ENCODE measurements at regions of chr5 and their contacts with region 1.

Region 1: DNA sequence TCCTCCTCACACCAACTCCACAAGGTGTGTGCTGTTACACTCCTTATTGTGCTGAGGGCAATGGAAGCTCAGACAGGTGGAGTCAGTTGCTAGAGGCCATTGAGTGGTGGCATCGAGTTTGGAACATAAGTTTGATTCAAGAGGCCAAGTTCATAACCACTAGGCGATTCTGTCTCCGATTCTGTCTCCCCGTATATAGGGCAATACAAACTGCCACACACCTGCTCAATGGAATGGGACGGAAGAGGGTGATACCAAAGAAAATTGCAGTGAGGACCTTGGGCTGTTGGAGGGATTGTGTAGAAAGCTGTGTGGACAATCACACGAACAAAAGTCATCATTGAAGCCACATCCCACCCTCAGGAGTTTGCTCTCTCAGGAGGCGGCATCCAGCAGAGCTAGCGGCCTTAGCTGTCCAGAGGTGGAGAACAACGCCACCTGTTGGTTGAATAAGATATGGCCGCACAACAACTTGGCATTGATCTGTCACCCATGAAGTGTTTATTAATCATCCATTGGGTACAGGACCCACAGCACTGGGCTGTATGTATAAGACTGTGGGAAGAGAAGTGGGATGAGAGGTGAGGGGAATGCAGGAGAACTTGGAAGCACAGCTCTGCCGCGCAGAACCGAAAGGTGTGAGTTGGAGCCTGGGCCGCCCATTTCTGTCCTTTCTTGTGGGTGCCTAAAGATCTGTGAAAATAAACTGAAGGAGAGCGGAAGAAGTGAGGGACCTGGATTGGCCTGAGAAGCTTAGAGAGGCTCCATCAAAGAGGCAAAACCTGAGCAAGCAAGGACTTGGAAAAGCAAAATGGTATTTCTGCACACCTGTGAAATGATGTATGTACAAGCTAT is 16.1 kb upstream of the NEUROG1 start:
- DNase-seq: peak; percentile 65
- H3K4me3 ChIP-seq: no peak overlapping the region
- H3K27ac ChIP-seq: no peak overlapping the region
- H3K4me1 ChIP-seq: no peaks in the 10 kb centered on the region
- H3K27me3 ChIP-seq: peaks cover 7% of the 10 kb centered on the region
- CTCF ChIP-seq: peak; percentile 74

Region 2: DNA sequence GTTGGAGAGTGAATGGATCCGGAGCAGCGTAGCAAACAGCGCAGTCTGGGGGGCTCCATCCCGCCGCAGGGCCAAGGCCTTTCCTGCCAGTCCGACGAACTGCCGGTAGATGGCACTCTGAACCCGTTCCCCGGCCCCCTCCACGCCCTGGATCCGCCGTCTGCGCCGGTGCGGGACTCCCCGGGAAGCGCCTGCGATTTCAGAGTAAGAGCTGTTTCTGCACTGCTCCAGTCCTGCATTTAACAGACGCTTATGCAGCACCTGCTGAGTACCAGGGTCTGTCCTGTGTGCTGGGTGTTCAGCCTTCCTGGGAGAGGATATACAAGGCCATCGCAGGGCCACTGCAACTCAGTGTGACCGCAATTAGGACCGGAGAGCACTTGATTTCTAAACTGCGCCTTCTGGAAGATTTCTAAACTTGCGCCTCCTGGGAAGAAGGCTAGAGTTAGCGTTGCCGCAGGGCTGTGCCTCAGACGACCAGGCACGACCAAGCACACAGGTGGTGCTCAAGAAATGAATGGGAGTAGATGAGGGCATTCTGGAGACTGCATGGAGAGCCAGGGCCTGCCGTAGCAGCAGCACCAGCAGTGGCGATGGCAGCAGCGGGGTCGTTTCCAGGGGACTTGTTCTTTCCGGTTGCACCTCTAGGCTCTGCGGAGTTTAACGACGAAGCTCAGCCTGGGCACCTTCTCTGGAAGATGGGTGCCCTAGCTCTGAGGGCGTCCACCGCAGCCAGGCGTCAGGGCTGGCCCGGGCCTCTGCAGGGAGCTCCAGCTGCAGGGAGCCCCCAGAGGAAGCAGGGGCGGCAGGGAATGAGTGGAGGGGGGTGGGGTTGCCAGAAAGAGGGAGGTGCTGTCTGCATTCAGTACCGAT is 85.4 kb before region 1 on chr5:
- intact Hi-C with region 1: loop called (anchors 2 kb)
- DNase-seq: peak; percentile 66
- H3K4me3 ChIP-seq: no peak overlapping the region
- H3K27ac ChIP-seq: no peak overlapping the region
- H3K4me1 ChIP-seq: no peaks in the 10 kb centered on the region
- H3K27me3 ChIP-seq: no peaks in the 10 kb centered on the region
- CTCF ChIP-seq: peak; percentile 75

Region 3: DNA sequence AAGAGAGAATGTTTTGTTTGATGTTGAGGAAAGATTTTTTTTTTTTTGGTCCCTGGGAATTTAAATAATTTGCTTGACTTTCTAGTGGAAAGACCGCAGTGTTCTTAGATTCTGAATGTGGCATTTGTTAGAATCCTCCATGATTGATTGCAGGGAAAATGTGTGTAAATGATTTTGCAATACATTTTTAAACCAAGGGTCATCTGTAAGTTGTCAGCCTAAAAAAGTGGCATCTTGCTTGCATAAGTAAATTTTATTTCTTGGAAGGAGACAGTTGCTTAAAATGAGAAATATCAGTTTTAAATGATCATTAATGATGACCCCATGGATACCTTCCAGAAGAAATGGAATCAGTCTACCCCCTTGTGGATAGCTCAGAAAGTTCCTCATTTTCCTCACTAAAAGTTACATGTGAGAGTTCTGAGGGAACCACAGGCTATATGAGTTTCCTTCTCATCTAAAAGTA is 177.5 kb after region 1 on chr5:
- intact Hi-C with region 1: no loop called
- DNase-seq: no peak
- H3K4me3 ChIP-seq: no peak overlapping the region
- H3K27ac ChIP-seq: no peak overlapping the region
- H3K4me1 ChIP-seq: no peaks in the 10 kb centered on the region
- H3K27me3 ChIP-seq: no peaks in the 10 kb centered on the region
- CTCF ChIP-seq: peak; percentile 34

Region 4: GRCh38 chr5:135750506-135750905 is 198.7 kb after region 1 on chr5:
- intact Hi-C with region 1: no loop called
- DNase-seq: no peak
- H3K4me3 ChIP-seq: no peak overlapping the region
- H3K27ac ChIP-seq: no peak overlapping the region
- H3K4me1 ChIP-seq: no peaks in the 10 kb centered on the region
- H3K27me3 ChIP-seq: no peaks in the 10 kb centered on the region
- CTCF ChIP-seq: no peak